ENCODE measurements at regions of chr1 and their contacts with region 1.

Region 1: GRCh38 chr1:156383023-156383422 is 14.0 kb downstream of the RHBG start:
- DNase-seq: peak; percentile 55
- H3K4me3 ChIP-seq: no peak overlapping the region
- H3K27ac ChIP-seq: no peak overlapping the region
- H3K4me1 ChIP-seq: peaks cover 3% of the 10 kb centered on the region
- H3K27me3 ChIP-seq: peaks cover 9 to 11% of the 10 kb centered on the region in 2 experiments
- CTCF ChIP-seq: peak; percentile 79 to 94
- POLR2A ChIP-seq: no peak

Region 2: GRCh38 chr1:156298852-156299357 is 84.1 kb before region 1 on chr1 and contains the start of gene VHLL:
- CTCF ChIA-PET with region 1: no interaction called
- POLR2A ChIA-PET with region 1: no interaction called
- dilution Hi-C with region 1: no loop called
- intact Hi-C with region 1: no loop called
- DNase-seq: no peak
- H3K4me3 ChIP-seq: no peak within 1 kb of the TSS
- H3K27ac ChIP-seq: no peak within 1 kb of the TSS
- H3K4me1 ChIP-seq: peaks cover 7% of the 10 kb centered on the region
- H3K27me3 ChIP-seq: no peaks in the 10 kb centered on the region
- CTCF ChIP-seq: no peak
- POLR2A ChIP-seq: no peak
- total RNA-seq, gene VHLL: 0.73 TPM in 1 of 2 replicates, not detected in the other

Region 3: DNA sequence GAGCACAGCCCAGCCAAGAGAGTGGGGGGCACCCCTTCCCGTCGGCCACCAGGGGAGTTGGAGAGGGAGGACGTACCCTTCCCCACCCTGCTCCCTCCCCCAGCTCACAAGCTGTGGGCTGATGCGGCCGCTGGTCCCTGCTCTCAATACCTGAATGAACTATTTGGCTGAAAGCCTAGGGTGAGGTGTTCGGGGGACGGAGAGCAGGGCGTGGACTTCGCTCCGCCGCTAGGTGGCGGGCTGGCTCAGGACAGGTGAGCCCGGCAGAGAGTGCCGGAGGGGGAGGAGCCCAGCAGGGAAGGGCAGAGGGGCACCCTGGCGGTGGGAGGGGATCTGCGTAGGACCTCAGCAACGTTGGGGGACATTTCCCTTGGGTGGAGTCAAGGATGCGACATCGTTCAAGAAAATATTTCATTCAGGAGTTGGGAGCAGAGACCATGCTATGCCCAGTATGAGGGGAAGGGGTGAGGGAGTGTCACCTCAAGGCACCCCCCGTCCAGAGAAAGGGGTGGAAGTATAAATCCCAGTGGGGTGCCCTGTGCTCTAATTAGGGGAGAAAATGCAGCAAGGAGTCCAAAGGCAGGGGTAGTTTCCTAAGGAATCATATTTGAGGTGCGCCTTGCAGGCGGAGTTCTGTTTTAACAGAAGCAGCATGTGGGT is 26.0 kb before region 1 on chr1:
- CTCF ChIA-PET with region 1: interaction called, 96 read pairs
- POLR2A ChIA-PET with region 1: no interaction called
- dilution Hi-C with region 1: no loop called
- intact Hi-C with region 1: no loop called
- DNase-seq: peak; percentile 23
- H3K4me3 ChIP-seq: no peak overlapping the region
- H3K27ac ChIP-seq: no peak overlapping the region
- H3K4me1 ChIP-seq: no peaks in the 10 kb centered on the region
- H3K27me3 ChIP-seq: peaks cover 17 to 28% of the 10 kb centered on the region in 2 experiments
- CTCF ChIP-seq: peak; percentile 60 to 84
- POLR2A ChIP-seq: no peak

Region 4: DNA sequence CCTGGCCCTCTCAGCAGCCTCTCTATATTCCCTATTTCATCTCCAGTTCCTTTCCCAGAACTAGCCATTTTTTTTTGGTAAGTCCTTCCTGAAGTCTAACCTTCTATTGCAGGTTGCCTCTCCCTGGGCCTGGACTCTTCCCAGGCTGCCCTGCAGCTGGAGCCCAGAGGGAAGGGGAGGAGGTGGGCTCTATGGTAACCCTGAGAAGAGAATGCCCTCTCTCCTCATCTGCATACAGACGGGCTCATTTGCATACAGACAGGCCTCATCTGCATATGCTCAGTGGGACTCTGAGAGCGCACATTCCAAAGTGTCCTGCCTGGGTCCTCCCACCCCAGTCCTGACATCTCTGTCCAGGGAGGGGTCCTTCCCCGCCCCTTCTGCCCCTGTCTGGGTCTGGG is 18.7 kb after region 1 on chr1:
- CTCF ChIA-PET with region 1: interaction called, 52 read pairs
- POLR2A ChIA-PET with region 1: no interaction called
- dilution Hi-C with region 1: no loop called
- intact Hi-C with region 1: no loop called
- DNase-seq: no peak
- H3K4me3 ChIP-seq: no peak overlapping the region
- H3K27ac ChIP-seq: no peak overlapping the region
- H3K4me1 ChIP-seq: no peaks in the 10 kb centered on the region
- H3K27me3 ChIP-seq: peaks cover 18 to 26% of the 10 kb centered on the region in 2 experiments
- CTCF ChIP-seq: no peak
- POLR2A ChIP-seq: no peak

Region 5: DNA sequence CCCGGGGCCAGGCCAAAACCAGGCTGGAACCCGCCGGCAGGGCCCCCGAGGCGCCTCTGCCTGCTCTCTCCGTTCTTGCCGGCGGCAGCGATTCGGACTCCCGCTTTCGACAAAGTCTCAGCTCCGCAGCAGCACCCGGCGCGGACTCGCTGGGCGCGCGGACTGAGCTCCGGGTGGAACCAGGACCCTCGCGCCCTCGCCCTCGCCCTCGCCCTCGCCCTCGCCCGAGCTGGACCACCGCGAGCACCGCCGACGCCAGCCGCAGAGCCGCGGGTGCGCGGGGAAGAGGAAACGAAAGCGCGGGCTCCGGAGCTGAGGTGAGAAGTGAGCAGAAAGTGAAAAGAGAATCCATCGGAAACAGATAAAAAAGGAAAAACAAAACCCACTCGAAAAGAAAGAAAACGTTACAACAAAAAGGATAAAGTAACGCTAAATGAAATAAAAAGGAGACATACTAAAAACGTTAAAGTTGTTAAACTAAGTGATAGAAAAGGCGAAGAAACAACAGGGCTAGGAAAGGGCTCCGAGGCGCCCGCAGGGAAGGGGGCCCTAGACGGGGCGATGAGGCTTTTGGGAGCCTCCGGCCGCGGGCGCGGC is 52.6 kb after region 1 on chr1:
- CTCF ChIA-PET with region 1: interaction called, 194 read pairs
- POLR2A ChIA-PET with region 1: no interaction called
- dilution Hi-C with region 1: no loop called
- intact Hi-C with region 1: no loop called
- DNase-seq: no peak
- H3K4me3 ChIP-seq: peak overlapping the region in 1 of 3 experiments; percentile 30
- H3K27ac ChIP-seq: no peak overlapping the region
- H3K4me1 ChIP-seq: peaks cover 4% of the 10 kb centered on the region
- H3K27me3 ChIP-seq: peaks cover 92 to 97% of the 10 kb centered on the region in 2 experiments
- CTCF ChIP-seq: no peak
- POLR2A ChIP-seq: no peak

Region 6: DNA sequence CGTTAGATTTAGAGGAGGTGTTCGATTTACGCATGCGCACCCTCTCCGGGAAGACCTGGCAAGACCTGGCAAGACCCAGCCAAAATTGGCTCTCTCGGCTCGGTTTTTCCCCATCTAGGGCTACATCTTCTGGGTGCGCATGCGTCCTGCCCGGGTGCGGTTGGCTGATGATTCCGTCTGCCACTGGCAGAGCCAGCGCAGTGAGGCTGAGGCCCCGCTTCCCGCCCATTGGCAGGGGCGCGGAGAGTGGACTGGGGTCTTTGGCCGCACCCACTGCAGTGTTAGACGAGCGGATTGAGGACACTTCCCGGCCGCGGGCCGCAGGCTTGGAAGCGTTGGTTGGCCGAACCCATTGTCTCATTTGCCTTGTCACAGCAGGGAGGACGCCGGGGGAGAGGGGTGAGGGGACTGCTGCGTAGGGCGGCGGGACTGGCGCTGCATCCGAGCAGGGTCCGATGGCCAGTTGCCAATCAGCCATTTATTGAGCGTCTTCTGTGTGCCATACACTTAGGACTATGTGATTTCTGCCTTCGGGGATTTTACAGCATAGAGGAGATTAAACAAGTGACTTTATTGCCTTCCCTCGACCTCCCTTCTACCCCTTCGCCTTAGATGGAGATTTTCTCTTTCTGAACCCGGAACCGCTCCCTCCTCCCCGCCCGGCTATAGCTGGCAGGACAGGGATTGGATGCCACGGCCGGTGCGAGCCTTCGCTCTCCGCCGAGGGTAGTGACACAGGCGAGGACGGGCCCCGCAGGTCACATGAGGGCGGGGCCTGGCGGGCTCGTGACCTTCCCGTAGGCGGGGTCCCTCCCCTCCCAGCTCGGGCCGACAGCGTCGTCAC is 73.8 kb after region 1 on chr1:
- CTCF ChIA-PET with region 1: interaction called, 146 read pairs
- POLR2A ChIA-PET with region 1: no interaction called
- dilution Hi-C with region 1: no loop called
- intact Hi-C with region 1: no loop called
- DNase-seq: peak; percentile 95
- H3K4me3 ChIP-seq: peak overlapping the region; percentile 11 to 73 (median 31)
- H3K27ac ChIP-seq: peak overlapping the region; percentile 80
- H3K4me1 ChIP-seq: peaks cover 11% of the 10 kb centered on the region
- H3K27me3 ChIP-seq: peaks cover 6 to 10% of the 10 kb centered on the region in 2 experiments
- CTCF ChIP-seq: no peak
- POLR2A ChIP-seq: peak; percentile 80

Region 7: GRCh38 chr1:156664767-156665411 is 281.9 kb after region 1 on chr1:
- CTCF ChIA-PET with region 1: no interaction called
- POLR2A ChIA-PET with region 1: no interaction called
- dilution Hi-C with region 1: no loop called
- intact Hi-C with region 1: no loop called
- DNase-seq: no peak
- H3K4me3 ChIP-seq: no peak overlapping the region
- H3K27ac ChIP-seq: peak overlapping the region; percentile 26
- H3K4me1 ChIP-seq: peaks cover 48% of the 10 kb centered on the region
- H3K27me3 ChIP-seq: no peaks in the 10 kb centered on the region
- CTCF ChIP-seq: no peak
- POLR2A ChIP-seq: no peak

Region 8: DNA sequence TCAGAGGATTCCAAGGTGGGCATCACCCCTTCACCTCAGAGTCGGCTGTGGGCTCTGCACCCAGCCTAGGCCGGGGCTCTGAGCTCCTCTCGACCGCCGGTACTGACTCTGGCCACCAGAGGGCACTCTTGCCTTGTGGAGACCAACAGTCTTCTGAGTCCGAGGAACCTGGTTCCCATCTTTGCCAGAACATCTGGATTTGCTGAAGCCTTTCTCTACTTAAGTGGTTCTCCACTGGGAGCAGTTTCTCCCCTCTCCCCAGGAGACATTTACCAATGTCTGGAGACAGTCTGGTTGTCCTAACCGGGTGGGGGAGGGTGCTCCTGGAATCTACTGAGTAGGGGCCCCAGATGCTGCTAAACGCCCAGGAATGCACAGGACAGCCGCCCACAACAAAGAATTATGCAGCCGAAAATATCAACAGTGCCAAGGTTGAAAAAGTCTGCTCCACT is 707.2 kb after region 1 on chr1:
- CTCF ChIA-PET with region 1: no interaction called
- POLR2A ChIA-PET with region 1: no interaction called
- dilution Hi-C with region 1: no loop called
- intact Hi-C with region 1: no loop called
- DNase-seq: peak; percentile 57
- H3K4me3 ChIP-seq: no peak overlapping the region
- H3K27ac ChIP-seq: no peak overlapping the region
- H3K4me1 ChIP-seq: no peaks in the 10 kb centered on the region
- H3K27me3 ChIP-seq: no peaks in the 10 kb centered on the region
- CTCF ChIP-seq: peak; percentile 84 to 90
- POLR2A ChIP-seq: no peak

Measured in endothelial cell of umbilical vein (primary cell).